ENCODE measurements at regions of chr3 and their contacts with region 1.

Region 1: GRCh38 chr3:108477511-108478147 is 32.8 kb downstream of the MYH15 start:
- DNase-seq: peak; percentile 75
- ATAC-seq: peak; percentile 55
- H3K4me3 Mint-ChIP-seq: no peak overlapping the region
- H3K27ac Mint-ChIP-seq: no peak overlapping the region
- H3K4me1 Mint-ChIP-seq: peaks cover 4% of the 10 kb centered on the region
- H3K27me3 Mint-ChIP-seq: peaks cover 4% of the 10 kb centered on the region

Region 2: GRCh38 chr3:108130701-108131474 is 346.7 kb before region 1 on chr3:
- CTCF ChIA-PET with region 1: interaction called, 19 read pairs
- POLR2A ChIA-PET with region 1: no interaction called
- DNase-seq: no peak
- ATAC-seq: no peak
- H3K4me3 Mint-ChIP-seq: no peak overlapping the region
- H3K27ac Mint-ChIP-seq: peak overlapping the region; percentile 1
- H3K4me1 Mint-ChIP-seq: peaks cover 85% of the 10 kb centered on the region
- H3K27me3 Mint-ChIP-seq: no peaks in the 10 kb centered on the region

Region 3: GRCh38 chr3:108153451-108153981 is 324.1 kb before region 1 on chr3:
- CTCF ChIA-PET with region 1: interaction called, 60 read pairs
- POLR2A ChIA-PET with region 1: no interaction called
- DNase-seq: peak; percentile 79
- ATAC-seq: peak; percentile 79
- H3K4me3 Mint-ChIP-seq: no peak overlapping the region
- H3K27ac Mint-ChIP-seq: no peak overlapping the region
- H3K4me1 Mint-ChIP-seq: peaks cover 8% of the 10 kb centered on the region
- H3K27me3 Mint-ChIP-seq: no peaks in the 10 kb centered on the region

Region 4: DNA sequence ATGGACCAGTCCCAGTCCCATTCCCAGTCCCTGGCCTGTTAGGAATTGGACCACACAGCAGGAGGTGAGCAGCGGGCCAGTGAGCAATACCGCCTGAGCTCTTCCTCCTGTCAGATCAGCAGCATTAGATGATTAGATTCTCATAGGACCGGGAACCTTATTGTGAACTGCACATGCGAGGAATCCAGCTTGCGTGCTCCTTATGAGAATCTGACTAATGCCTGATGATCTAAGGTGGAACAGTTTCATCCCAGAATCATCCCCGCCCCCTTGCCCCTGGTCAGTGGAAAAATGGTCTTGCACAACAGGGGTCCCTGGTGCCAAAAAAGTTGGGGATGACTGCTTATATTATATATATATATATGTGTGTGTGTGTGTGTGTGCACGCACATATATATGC is 318.5 kb before region 1 on chr3:
- CTCF ChIA-PET with region 1: interaction called, 60 read pairs
- POLR2A ChIA-PET with region 1: no interaction called
- DNase-seq: no peak
- ATAC-seq: no peak
- H3K4me3 Mint-ChIP-seq: no peak overlapping the region
- H3K27ac Mint-ChIP-seq: no peak overlapping the region
- H3K4me1 Mint-ChIP-seq: peaks cover 2% of the 10 kb centered on the region
- H3K27me3 Mint-ChIP-seq: no peaks in the 10 kb centered on the region

Region 5: DNA sequence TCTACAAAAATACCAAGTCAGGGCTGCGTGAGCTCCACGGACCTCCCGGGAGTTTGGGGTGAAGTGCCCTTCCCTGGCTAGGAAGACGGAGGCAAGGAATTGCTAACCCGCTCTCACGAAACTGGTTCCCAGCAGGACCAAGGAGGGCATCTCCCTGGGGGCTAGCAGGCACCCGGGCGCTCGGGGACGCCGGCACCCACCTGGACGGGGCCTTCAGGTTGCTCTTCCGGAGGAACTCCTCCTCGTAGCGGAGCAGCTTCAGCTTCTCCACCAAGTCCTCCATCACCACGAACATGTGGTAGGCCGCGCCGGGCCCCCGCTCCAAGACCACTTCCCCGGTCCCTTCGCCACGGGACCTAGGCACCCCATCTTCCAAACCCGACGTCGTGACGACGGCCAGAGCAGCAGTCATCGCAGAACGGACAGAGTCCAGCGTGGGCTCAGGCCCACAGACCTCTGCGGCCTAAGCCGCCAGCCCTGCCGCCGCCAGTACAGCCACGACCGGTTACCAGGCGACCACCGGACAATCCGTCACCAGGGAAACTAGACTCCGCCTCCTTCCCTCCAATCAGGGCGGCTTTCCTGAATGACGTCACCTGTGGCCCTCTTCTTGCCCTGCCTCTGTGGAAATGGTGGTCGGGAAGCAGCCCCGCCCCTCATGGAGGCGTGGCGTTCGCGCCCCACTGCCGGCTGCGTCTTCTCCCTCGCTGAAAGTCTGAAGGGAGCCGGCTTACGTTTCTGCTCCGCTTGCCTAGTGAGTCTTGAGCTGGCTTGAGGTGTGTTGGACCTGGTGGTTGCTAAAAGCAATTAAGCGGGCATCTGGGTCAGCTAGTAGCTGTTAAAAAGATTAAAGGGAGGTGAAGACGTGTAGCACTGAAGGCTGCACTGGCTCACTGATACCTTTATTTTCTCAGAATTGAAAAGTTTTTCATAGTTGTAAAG is 255.4 kb before region 1 on chr3 and contains the start of gene IFT57:
- CTCF ChIA-PET with region 1: interaction called, 10 read pairs
- POLR2A ChIA-PET with region 1: no interaction called
- DNase-seq: peak; percentile 97
- ATAC-seq: peak; percentile 95
- H3K4me3 Mint-ChIP-seq: peak within 1 kb of the TSS; percentile 99
- H3K27ac Mint-ChIP-seq: peak within 1 kb of the TSS; percentile 98
- H3K4me1 Mint-ChIP-seq: peaks cover 45% of the 10 kb centered on the region
- H3K27me3 Mint-ChIP-seq: no peaks in the 10 kb centered on the region
- total RNA-seq, gene IFT57: 23.9 to 25.5 TPM

Region 6: GRCh38 chr3:108328821-108329486 is 148.7 kb before region 1 on chr3:
- CTCF ChIA-PET with region 1: no interaction called
- POLR2A ChIA-PET with region 1: no interaction called
- DNase-seq: peak; percentile 33
- ATAC-seq: peak; percentile 73
- H3K4me3 Mint-ChIP-seq: peak overlapping the region; percentile 7
- H3K27ac Mint-ChIP-seq: peak overlapping the region; percentile 70
- H3K4me1 Mint-ChIP-seq: peaks cover 52% of the 10 kb centered on the region
- H3K27me3 Mint-ChIP-seq: no peaks in the 10 kb centered on the region

Region 7: DNA sequence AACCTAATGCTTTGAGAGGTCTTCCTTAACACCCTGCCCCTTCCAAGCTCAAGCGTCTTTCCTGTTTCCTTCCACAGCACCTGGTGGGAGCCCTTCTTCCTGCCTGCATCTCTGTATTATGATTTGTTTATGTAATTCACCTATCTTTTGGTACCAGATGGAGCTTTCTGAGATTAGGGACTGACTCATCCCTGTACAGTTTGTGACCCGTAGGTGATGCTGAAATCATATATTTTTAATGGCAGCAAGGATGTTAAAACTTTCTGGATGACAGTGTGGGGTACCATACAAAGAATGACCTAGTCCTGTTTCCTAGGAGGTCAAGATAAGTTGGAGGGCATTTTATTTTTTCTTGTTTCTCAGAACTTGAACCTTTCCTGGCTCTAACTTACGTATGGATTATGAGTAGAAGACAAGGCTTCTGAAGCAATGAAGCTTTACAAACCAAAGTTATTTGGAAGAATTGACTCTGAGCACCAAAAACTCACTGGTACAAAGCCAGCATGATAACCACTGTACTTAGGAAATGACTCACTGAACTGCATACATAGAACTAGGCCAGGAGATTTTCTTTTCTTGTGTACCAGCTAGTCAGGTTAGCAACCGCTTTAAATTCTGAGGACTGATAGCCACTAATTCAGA is 134.7 kb before region 1 on chr3:
- CTCF ChIA-PET with region 1: interaction called, 16 read pairs
- POLR2A ChIA-PET with region 1: no interaction called
- DNase-seq: no peak
- ATAC-seq: peak; percentile 69
- H3K4me3 Mint-ChIP-seq: no peak overlapping the region
- H3K27ac Mint-ChIP-seq: peak overlapping the region; percentile 27
- H3K4me1 Mint-ChIP-seq: peaks cover 29% of the 10 kb centered on the region
- H3K27me3 Mint-ChIP-seq: no peaks in the 10 kb centered on the region

Region 8: DNA sequence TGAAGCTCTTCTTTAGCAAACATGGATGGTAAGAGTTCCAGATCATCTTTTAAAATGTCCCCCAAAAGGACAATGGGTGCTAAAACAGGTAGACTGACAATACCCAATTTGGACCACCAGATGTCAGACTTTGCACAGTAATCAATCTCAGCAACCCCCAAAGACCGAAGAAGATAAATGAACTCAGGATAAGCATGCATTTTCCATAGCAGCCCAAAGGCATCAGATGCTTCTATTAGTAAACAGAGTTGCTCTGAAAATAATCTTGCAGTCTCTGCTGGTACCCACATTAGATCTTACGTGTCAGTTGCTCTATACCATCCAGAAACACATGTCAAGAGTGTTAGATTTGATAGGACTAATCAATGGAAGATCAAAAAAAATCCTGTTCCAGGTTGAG is 12.1 kb after region 1 on chr3:
- CTCF ChIA-PET with region 1: interaction called, 59 read pairs
- POLR2A ChIA-PET with region 1: no interaction called
- DNase-seq: peak; percentile 58
- ATAC-seq: peak; percentile 76
- H3K4me3 Mint-ChIP-seq: no peak overlapping the region
- H3K27ac Mint-ChIP-seq: no peak overlapping the region
- H3K4me1 Mint-ChIP-seq: peaks cover 2% of the 10 kb centered on the region
- H3K27me3 Mint-ChIP-seq: peaks cover 9% of the 10 kb centered on the region

Region 9: GRCh38 chr3:108564564-108564963 is 86.9 kb after region 1 on chr3:
- CTCF ChIA-PET with region 1: no interaction called
- POLR2A ChIA-PET with region 1: no interaction called
- DNase-seq: no peak
- ATAC-seq: no peak
- H3K4me3 Mint-ChIP-seq: no peak overlapping the region
- H3K27ac Mint-ChIP-seq: no peak overlapping the region
- H3K4me1 Mint-ChIP-seq: no peaks in the 10 kb centered on the region
- H3K27me3 Mint-ChIP-seq: no peaks in the 10 kb centered on the region

Region 10: DNA sequence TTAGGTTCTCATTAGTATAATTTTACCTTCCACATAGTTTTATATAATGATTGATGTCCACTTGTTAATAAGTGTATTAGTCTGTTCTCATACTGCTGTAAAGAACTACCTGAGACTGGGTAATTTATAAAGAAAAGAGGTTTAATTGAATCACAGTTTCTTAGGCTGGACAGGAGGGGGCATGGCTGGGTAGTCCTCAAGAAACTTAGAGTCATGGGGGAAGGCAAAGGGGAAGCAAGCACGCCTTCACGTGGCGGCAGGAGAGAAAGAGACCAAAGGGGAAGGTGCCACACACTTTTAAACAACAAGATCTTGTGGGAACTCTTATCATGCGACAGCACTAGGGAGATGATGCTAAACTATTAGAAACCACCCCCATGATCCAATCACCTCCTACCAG is 131.1 kb after region 1 on chr3:
- CTCF ChIA-PET with region 1: no interaction called
- POLR2A ChIA-PET with region 1: no interaction called
- DNase-seq: no peak
- ATAC-seq: no peak
- H3K4me3 Mint-ChIP-seq: no peak overlapping the region
- H3K27ac Mint-ChIP-seq: no peak overlapping the region
- H3K4me1 Mint-ChIP-seq: peaks cover 22% of the 10 kb centered on the region
- H3K27me3 Mint-ChIP-seq: no peaks in the 10 kb centered on the region

Measured in activated CD8-positive, alpha-beta T cell treated with anti-CD3 and anti-CD28 coated beads, Interleukin-2, amount 10 ng/mL, durations not matched to agents 7 days and 5 days (primary cell).